ENCODE measurements at regions of chr22 and their contacts with region 1.

Region 1: DNA sequence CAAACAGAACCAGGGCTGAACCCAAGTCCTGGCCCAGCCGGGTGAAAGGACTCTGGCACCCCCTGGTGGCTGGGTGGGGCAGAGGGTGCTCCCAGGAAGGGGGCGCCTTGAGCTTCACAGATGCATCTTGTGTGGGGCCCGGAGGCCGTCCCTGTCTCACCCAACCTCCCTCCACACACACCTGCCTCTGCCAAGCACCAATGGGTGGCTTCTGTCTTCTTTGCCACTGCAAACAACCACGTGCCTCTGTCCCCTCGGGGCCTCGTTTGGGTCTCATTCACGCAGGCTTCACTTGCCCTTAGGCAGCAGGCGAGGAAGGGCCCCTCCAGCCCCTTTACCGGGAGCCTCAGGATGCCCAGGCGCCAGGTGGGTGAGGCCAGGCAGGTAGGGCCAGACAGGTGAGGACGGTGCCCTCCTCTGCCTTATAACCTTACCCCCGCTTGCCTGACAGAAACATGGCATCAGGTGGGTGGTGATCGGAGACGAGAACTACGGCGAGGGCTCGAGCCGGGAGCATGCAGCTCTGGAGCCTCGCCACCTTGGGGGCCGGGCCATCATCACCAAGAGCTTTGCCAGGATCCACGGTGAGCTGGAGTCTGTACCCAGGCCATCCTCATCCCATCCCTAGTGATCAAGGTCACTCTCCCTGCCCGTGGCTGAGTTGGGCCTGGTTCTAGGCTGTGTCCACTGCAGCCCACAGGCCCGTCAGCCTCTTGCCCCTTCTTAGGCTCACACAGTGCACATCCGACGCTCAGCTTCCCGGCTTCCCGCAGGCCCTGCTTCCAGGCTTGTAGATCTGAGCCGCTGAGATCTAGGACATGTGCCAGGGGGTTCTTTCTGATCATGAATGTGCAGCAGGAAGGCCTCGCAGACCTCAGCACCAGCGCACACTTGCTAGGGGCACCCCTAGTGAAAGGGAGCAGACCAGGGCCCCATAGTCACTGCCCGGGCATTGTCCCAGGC is 17.2 kb downstream of the POLR3H start:
- DNase-seq: peak; percentile 67
- ATAC-seq: peak; percentile 10

Region 2: DNA sequence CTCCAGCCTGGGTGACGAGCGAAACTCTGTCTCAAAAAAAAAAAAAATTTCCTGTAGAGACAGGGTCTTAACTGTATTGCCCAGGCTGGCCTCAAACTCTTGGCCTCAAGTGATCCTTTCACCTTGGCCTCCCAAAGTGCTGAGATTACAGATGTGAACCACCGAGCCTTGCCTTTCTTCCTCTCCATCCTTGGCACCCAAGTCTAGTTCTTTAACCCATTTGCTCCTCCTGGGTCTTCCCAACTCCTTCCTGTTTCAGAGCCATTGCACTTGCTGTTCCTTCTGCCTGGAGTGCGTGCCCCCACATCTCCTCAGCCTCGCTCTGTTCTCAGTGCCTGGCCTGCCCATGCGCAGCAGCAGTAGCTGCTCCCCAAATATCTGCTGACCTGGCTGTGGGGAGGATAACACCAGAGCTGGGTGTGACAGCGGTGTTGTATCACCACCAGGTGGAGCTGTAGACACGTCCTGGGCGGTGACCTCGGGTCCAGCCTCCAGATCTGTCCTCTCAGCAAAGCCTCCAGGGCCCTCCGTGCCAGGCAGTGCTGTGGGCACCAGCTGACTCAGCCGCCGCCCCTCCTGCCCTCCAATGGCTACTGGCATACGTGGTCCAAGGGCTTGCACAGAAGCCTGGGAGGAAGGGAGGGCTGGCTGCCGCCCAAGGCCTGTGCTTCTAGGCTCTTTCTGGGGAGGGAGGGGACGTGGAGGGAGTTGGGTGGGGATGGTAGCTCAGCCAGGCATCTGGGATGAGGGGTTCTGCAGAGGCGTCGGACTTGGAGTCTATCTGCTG is 123.4 kb before region 1 on chr22:
- intact Hi-C with region 1: loop called (anchors 5 kb)
- DNase-seq: peak; percentile 94
- ATAC-seq: peak; percentile 86

Measured in left ventricle myocardium superior (tissue), 1 donor.